ENCODE measurements at regions of chr9 and their contacts with region 1.

Region 1: GRCh38 chr9:133509179-133510079 is 15.3 kb downstream of the MYMK start:
- DNase-seq: peak; percentile 70 to 82 (median 79)
- ATAC-seq: peak; percentile 67 to 81 (median 76)
- H3K4me3 ChIP-seq: peak overlapping the region in 1 of 3 donors; percentile 9
- H3K27ac ChIP-seq: peak overlapping the region; percentile 19 to 60 (median 38)
- H3K4me1 ChIP-seq: peaks cover 0 to 35% (median 14%) of the 10 kb centered on the region in 4 donors
- H3K27me3 ChIP-seq: no peaks in the 10 kb centered on the region
- CTCF ChIP-seq: peak in 1 of 4 donors; percentile 15
- POLR2A ChIP-seq: peak; percentile 70

Region 2: GRCh38 chr9:133286523-133286922 is 222.9 kb before region 1 on chr9:
- intact Hi-C with region 1: no loop called
- DNase-seq: no peak
- ATAC-seq: no peak
- H3K4me3 ChIP-seq: no peak overlapping the region
- H3K27ac ChIP-seq: no peak overlapping the region
- H3K4me1 ChIP-seq: no peaks in the 10 kb centered on the region
- H3K27me3 ChIP-seq: no peaks in the 10 kb centered on the region
- CTCF ChIP-seq: no peak
- POLR2A ChIP-seq: no peak

Region 3: GRCh38 chr9:133459476-133460404 is 49.7 kb before region 1 on chr9 and contains the start of gene CACFD1:
- intact Hi-C with region 1: no loop called
- DNase-seq: peak; percentile 99
- ATAC-seq: peak; percentile 87 to 92 (median 88)
- H3K4me3 ChIP-seq: peak within 1 kb of the TSS; percentile 43 to 79 (median 72)
- H3K27ac ChIP-seq: peak within 1 kb of the TSS; percentile 79 to 99 (median 98)
- H3K4me1 ChIP-seq: peaks cover 0 to 22% (median 6%) of the 10 kb centered on the region in 4 donors
- H3K27me3 ChIP-seq: no peaks in the 10 kb centered on the region
- CTCF ChIP-seq: peak in 1 of 4 donors; percentile 2
- POLR2A ChIP-seq: peak; percentile 87
- total RNA-seq, gene CACFD1: 23.5 to 39.8 (median 32.9) TPM

Region 4: GRCh38 chr9:133715866-133716563 is 206.6 kb after region 1 on chr9:
- intact Hi-C with region 1: loop called in 1 of 2 experiments (anchors 10 kb)
- DNase-seq: peak in 1 of 3 donors; percentile 49
- ATAC-seq: peak in 3 of 4 donors; percentile 3 to 9 (median 4)
- H3K4me3 ChIP-seq: no peak overlapping the region
- H3K27ac ChIP-seq: peak overlapping the region; percentile 36 to 75 (median 44)
- H3K4me1 ChIP-seq: peaks cover 0 to 46% (median 5%) of the 10 kb centered on the region in 4 donors
- H3K27me3 ChIP-seq: no peaks in the 10 kb centered on the region
- CTCF ChIP-seq: peak in 3 of 4 donors; percentile 28 to 31 (median 30)
- POLR2A ChIP-seq: no peak

Region 5: DNA sequence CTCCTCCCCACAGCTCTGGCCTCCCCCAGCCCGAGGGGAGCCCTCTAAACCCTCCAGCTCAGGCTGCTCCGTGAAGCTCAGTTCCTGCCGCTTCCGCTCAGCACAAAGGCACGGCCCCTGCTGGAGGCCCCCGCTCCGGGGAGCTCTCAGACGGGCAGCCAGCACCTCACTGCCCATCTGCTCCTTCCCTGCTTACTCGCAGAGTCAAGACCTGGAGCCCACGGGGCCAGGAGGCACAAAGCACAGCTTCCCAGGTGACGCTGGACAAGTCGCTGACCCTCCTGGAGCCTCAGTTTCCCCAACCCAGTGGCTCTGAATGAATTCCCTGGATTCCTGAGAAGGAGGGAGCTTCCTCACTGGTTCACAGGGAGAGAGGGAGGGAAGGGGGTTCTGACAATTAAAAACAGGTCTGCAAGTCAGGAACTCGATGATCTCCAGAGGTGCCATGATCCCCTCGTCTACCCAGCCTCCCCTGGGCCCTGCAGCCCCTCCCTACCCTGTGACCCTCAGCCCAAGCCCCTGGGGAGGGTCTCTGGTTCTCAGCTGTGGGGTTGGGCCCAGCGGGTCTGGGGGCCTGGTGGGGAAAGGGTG is 446.5 kb after region 1 on chr9:
- intact Hi-C with region 1: no loop called
- DNase-seq: peak in 2 of 3 donors; percentile 34 to 55
- ATAC-seq: peak in 3 of 4 donors; percentile 7 to 16 (median 8)
- H3K4me3 ChIP-seq: no peak overlapping the region
- H3K27ac ChIP-seq: peak overlapping the region in 2 of 3 donors; percentile 22 to 40
- H3K4me1 ChIP-seq: peaks cover 0 to 18% (median 5%) of the 10 kb centered on the region in 4 donors
- H3K27me3 ChIP-seq: no peaks in the 10 kb centered on the region
- CTCF ChIP-seq: no peak
- POLR2A ChIP-seq: no peak